ENCODE measurements at regions of chr5 and their contacts with region 1.

Region 1: GRCh38 chr5:134436523-134437339 is 25.1 kb upstream of the CDKN2AIPNL start:
- DNase-seq: peak; percentile 90 to 96
- ATAC-seq: peak; percentile 77 to 83
- H3K4me3 ChIP-seq: peak overlapping the region; percentile 25 to 46 (median 32)
- H3K27ac ChIP-seq: peak overlapping the region; percentile 97 to 99 (median 98)
- H3K4me1 ChIP-seq: peaks cover 70 to 72% of the 10 kb centered on the region in 2 donors
- H3K27me3 ChIP-seq: no peaks in the 10 kb centered on the region
- CTCF ChIP-seq: no peak
- POLR2A ChIP-seq: peak; percentile 21 to 52

Region 2: GRCh38 chr5:134465816-134466240 is 29.1 kb after region 1 on chr5:
- in situ Hi-C with region 1: no loop called
- intact Hi-C with region 1: loop called (anchors 1 kb)
- DNase-seq: peak; percentile 82 to 93
- ATAC-seq: peak; percentile 68
- H3K4me3 ChIP-seq: peak overlapping the region; percentile 59 to 72 (median 62)
- H3K27ac ChIP-seq: peak overlapping the region; percentile 93 to 99 (median 98)
- H3K4me1 ChIP-seq: peaks cover 26 to 43% of the 10 kb centered on the region in 2 donors
- H3K27me3 ChIP-seq: no peaks in the 10 kb centered on the region
- CTCF ChIP-seq: peak in 3 of 5 experiments; percentile 15 to 27 (median 20)
- POLR2A ChIP-seq: peak; percentile 88 to 92

Region 3: GRCh38 chr5:134511788-134512650 is 75.3 kb after region 1 on chr5:
- in situ Hi-C with region 1: no loop called
- intact Hi-C with region 1: loop called (anchors 2 kb)
- DNase-seq: peak; percentile 85 to 96
- ATAC-seq: peak; percentile 84 to 88
- H3K4me3 ChIP-seq: no peak overlapping the region
- H3K27ac ChIP-seq: peak overlapping the region; percentile 79 to 93 (median 85)
- H3K4me1 ChIP-seq: peaks cover 20 to 33% of the 10 kb centered on the region in 2 donors
- H3K27me3 ChIP-seq: no peaks in the 10 kb centered on the region
- CTCF ChIP-seq: peak; percentile 50 to 68 (median 62)
- POLR2A ChIP-seq: peak; percentile 22 to 33

Region 4: DNA sequence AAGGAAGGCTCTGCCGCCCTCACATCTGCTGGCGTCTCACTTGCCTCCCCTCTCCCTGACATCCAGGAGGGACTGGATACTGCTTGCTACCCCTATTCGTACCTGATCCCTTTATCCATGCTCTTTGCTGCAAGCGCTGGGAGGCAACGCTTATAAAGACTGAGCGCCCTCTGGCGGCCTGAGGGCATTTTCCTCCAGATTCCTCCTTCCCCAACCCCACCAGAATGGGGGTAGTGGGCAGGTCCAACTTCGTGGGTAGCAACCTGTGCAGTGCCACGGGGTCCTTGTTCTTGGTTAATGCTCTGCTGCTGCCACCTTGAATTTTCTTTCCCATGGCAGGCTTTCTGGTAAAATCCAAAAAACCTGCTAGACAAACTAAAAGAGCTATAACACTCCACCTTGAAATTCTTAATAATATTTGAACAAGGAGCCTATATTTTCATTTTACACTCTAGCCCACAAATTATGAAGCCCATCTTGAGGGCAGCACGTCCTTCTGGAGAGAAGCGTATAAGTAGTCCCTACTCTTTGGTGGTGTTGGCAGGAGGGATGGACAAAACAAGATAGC is 141.1 kb after region 1 on chr5:
- in situ Hi-C with region 1: no loop called
- intact Hi-C with region 1: loop called (anchors 5 kb)
- DNase-seq: peak; percentile 31 to 69
- ATAC-seq: peak; percentile 53 to 57
- H3K4me3 ChIP-seq: no peak overlapping the region
- H3K27ac ChIP-seq: peak overlapping the region in 1 of 4 donors; percentile 7
- H3K4me1 ChIP-seq: peaks cover 27 to 38% of the 10 kb centered on the region in 2 donors
- H3K27me3 ChIP-seq: no peaks in the 10 kb centered on the region
- CTCF ChIP-seq: peak; percentile 80 to 87 (median 86)
- POLR2A ChIP-seq: no peak

Region 5: DNA sequence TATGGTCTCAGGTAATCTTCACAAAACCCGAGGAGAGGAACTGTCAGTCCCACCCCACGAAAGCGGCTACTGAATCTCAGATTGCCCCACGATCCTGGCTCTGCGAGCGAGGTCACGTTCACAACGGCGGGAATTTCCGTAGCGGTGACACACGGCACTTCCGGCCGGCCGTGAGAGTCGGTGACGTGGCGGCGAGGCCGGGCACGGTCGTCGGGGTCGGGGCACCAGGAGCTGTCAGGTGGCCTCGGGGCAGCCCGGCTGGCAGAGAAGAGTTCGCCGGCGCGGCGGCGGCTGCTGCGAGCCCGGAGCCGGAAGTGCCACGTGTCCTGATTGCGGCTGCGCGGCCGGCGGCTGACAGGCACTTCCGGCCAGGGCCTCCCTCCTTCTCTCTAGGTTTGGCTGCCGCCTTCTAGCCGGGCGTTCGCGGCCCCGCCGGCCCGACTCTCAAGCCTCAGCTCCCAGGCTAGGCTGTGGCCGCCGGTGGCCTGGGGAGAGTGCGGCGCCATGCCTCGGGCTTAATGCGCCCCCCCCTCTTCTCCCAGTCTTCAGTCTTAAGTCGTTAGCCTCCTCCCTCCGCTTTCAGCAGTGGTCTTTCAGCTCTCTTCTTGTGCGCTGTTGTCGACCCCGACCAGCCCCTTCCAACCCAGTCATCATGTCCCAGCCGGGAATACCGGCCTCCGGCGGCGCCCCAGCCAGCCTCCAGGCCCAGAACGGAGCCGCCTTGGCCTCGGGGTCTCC is 211.9 kb after region 1 on chr5 and contains the start of gene SEC24A:
- in situ Hi-C with region 1: no loop called
- intact Hi-C with region 1: loop called (anchors 5 kb)
- DNase-seq: peak; percentile 94 to 97
- ATAC-seq: peak; percentile 88
- H3K4me3 ChIP-seq: peak within 1 kb of the TSS; percentile 90 to 100 (median 94)
- H3K27ac ChIP-seq: peak within 1 kb of the TSS; percentile 98 to 100 (median 98)
- H3K4me1 ChIP-seq: peaks cover 23 to 35% of the 10 kb centered on the region in 2 donors
- H3K27me3 ChIP-seq: no peaks in the 10 kb centered on the region
- CTCF ChIP-seq: no peak
- POLR2A ChIP-seq: peak; percentile 80 to 86
- total RNA-seq, gene SEC24A: 11.4 to 18.3 (median 13.6) TPM

Measured in gastrocnemius medialis (tissue), 4 donors.